Activated B cell treated with CpG ODN at 0.5 μM for 24 hours (primary cell): ENCODE measurements at regions of chr17 and their contacts with region 1.

Region 1: DNA sequence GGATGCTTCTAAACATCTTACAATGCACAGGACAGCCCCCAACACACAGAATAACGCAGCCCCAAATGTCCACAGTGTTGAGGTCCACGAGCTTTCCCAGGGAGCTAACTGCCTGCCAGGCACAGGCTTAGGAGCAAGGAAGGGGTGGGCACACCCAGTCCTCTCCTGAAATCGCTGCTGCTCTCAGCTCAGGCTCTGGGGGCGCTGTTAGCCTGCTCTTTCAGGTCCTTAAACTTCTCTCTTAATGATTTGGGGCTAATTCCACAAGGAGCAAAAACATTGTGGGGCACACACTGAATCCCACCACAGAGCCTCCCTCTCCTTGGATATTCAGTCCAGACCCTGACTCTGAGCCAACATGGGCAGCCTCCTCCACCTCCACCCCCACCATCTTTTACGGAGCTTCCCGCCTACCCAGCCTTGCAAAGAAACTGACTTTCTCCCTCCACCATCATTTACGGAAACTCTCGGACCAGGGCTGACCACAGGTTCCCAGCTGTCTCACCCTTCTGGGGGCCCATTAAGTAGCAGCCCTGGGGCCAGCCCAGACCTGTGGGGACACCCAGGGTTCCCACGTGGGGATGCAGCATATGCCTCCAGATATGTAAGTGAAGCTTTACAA is 1.1 kb downstream of the CD300H start:
- DNase-seq: no peak
- ATAC-seq: peak; percentile 54
- H3K4me3 Mint-ChIP-seq: no peak overlapping the region
- H3K27ac Mint-ChIP-seq: no peak overlapping the region
- H3K4me1 Mint-ChIP-seq: peaks cover 9% of the 10 kb centered on the region
- H3K27me3 Mint-ChIP-seq: peaks cover 40% of the 10 kb centered on the region
- CTCF ChIP-seq: no peak

Region 2: GRCh38 chr17:74513987-74514631 is 52.1 kb before region 1 on chr17:
- CTCF ChIA-PET with region 1: no interaction called
- POLR2A ChIA-PET with region 1: no interaction called
- intact Hi-C with region 1: no loop called
- DNase-seq: peak; percentile 38
- ATAC-seq: peak; percentile 7
- H3K4me3 Mint-ChIP-seq: peak overlapping the region; percentile 48
- H3K27ac Mint-ChIP-seq: peak overlapping the region; percentile 84
- H3K4me1 Mint-ChIP-seq: peaks cover 26% of the 10 kb centered on the region
- H3K27me3 Mint-ChIP-seq: peaks cover 5% of the 10 kb centered on the region
- CTCF ChIP-seq: no peak

Region 3: DNA sequence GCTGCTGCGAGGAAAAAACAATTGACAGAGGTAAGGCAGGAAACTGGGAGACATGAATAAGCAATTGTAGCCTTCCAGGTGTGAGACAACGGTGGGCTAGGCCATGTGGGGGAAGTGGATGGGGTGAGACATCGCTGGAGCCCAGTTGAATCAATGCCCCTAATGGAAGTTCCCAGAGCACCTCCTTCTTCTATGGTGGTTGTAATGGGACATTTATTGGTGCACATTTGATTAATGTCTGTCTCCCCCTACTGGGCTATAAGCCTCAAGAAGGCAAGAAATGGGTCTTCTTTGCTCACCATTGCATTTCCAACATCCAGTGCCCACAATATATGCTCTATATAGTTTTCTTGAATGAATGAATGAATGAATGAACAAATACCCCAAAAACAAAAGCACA is 80.0 kb after region 1 on chr17:
- CTCF ChIA-PET with region 1: interaction called, 5 read pairs
- POLR2A ChIA-PET with region 1: interaction called, 3 read pairs
- intact Hi-C with region 1: loop called (anchors 1 kb)
- DNase-seq: no peak
- ATAC-seq: peak; percentile 45
- H3K4me3 Mint-ChIP-seq: no peak overlapping the region
- H3K27ac Mint-ChIP-seq: peak overlapping the region; percentile 31
- H3K4me1 Mint-ChIP-seq: peaks cover 46% of the 10 kb centered on the region
- H3K27me3 Mint-ChIP-seq: peaks cover 34% of the 10 kb centered on the region
- CTCF ChIP-seq: no peak

Region 4: DNA sequence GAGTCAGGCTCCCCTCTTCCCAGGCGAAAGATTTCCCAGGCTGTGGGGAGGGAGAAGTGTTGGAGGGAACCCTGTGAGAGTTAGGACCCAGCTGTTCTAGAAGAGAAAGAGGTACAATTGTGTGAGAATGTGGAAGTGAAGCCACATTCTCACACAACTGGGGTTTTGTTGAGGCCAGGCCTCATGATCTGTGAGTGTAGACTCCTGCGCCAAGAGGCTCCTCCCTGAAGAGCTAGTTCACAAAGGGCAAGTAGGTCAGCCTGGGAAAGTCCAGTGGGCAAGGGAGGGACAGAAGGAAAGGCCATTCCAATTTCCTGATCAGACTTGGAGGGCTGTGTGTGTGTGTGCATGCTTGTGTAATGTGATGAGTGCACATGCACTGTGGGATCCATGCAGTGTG is 131.3 kb after region 1 on chr17:
- CTCF ChIA-PET with region 1: no interaction called
- POLR2A ChIA-PET with region 1: no interaction called
- intact Hi-C with region 1: no loop called
- DNase-seq: no peak
- ATAC-seq: no peak
- H3K4me3 Mint-ChIP-seq: no peak overlapping the region
- H3K27ac Mint-ChIP-seq: no peak overlapping the region
- H3K4me1 Mint-ChIP-seq: no peaks in the 10 kb centered on the region
- H3K27me3 Mint-ChIP-seq: peaks cover 14% of the 10 kb centered on the region
- CTCF ChIP-seq: no peak

Region 5: DNA sequence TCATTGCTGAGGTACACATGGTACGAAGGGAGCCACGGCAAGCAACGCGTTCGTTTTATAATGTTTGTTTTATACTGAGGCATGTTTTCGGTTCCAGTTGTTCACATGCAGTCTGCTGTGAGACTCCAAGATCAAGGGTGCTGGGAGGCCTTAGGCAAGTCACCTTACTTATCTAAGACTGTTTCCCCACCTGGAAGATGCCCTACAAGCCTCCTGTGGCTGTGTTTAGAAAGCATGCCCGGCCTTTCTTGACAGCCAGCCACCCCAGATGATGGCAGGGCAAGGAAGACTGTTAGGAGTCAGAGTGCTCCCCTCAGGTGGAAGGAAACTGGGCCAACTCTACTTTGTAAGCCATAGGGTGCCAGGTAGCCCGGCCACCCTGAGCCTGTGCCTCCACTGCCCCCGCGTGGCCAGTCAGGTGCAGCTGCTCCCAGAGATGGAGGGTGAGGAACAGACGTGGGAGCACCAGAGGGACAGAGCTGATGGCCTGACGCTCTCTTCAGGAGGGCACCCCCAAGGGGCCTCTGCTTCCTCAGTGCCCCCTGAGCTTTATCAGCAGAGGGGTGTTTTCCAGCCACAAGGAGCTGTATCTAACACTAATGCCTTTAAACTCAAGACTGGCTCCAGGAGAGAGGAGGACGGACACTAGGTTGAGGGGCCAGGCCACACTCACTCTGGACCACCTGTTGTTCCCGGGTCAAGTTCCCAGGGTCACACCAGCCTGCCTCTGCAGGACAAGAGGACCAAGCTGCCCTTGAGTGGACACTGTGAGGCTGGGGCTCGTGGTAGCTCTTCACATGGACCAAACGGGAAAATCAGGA is 204.5 kb after region 1 on chr17:
- CTCF ChIA-PET with region 1: interaction called, 10 read pairs
- POLR2A ChIA-PET with region 1: no interaction called
- intact Hi-C with region 1: no loop called
- DNase-seq: peak; percentile 57
- ATAC-seq: peak; percentile 97
- H3K4me3 Mint-ChIP-seq: no peak overlapping the region
- H3K27ac Mint-ChIP-seq: peak overlapping the region; percentile 46
- H3K4me1 Mint-ChIP-seq: peaks cover 18% of the 10 kb centered on the region
- H3K27me3 Mint-ChIP-seq: no peaks in the 10 kb centered on the region
- CTCF ChIP-seq: no peak

Region 6: GRCh38 chr17:74864866-74865395 is 298.7 kb after region 1 on chr17:
- CTCF ChIA-PET with region 1: no interaction called
- POLR2A ChIA-PET with region 1: no interaction called
- intact Hi-C with region 1: loop called (anchors 5 kb)
- DNase-seq: peak; percentile 69
- ATAC-seq: peak; percentile 76
- H3K4me3 Mint-ChIP-seq: no peak overlapping the region
- H3K27ac Mint-ChIP-seq: no peak overlapping the region
- H3K4me1 Mint-ChIP-seq: peaks cover 25% of the 10 kb centered on the region
- H3K27me3 Mint-ChIP-seq: peaks cover 11% of the 10 kb centered on the region
- CTCF ChIP-seq: no peak